A549 (cell line): ENCODE measurements at regions of chr17 and their contacts with region 1.

Region 1: GRCh38 chr17:79393358-79394202 is 217.3 kb downstream of the RBFOX3 start:
- DNase-seq: peak; percentile 69 to 89
- ATAC-seq: peak; percentile 63 to 87
- H3K4me3 ChIP-seq: no peak overlapping the region
- H3K27ac ChIP-seq: no peak overlapping the region
- H3K4me1 ChIP-seq: no peaks in the 10 kb centered on the region
- CTCF ChIP-seq: peak; percentile 83
- EP300 ChIP-seq: no peak
- POLR2A ChIP-seq: no peak
- RAD21 ChIP-seq: peak; percentile 84 to 95

Region 2: GRCh38 chr17:79019632-79020584 is 373.7 kb before region 1 on chr17:
- CTCF ChIA-PET with region 1: interaction called, 44 read pairs
- POLR2A ChIA-PET with region 1: no interaction called
- DNase-seq: peak; percentile 71 to 82
- ATAC-seq: peak; percentile 48 to 62; a peak in 3 of 6 replicates
- H3K4me3 ChIP-seq: no peak overlapping the region
- H3K27ac ChIP-seq: peak overlapping the region; percentile 32 to 43; a peak in 4 of 6 replicates
- H3K4me1 ChIP-seq: peaks cover 15% of the 10 kb centered on the region
- CTCF ChIP-seq: peak; percentile 98
- EP300 ChIP-seq: no peak; a peak in 1 of 5 replicates
- POLR2A ChIP-seq: no peak
- RAD21 ChIP-seq: peak; percentile 91 to 96

Region 3: GRCh38 chr17:79087428-79088143 is 306.0 kb before region 1 on chr17:
- CTCF ChIA-PET with region 1: interaction called, 555 read pairs
- POLR2A ChIA-PET with region 1: interaction called, 3 read pairs
- DNase-seq: peak; percentile 68 to 96
- ATAC-seq: peak; percentile 70 to 90
- H3K4me3 ChIP-seq: no peak overlapping the region
- H3K27ac ChIP-seq: no peak overlapping the region
- H3K4me1 ChIP-seq: no peaks in the 10 kb centered on the region
- CTCF ChIP-seq: peak; percentile 95
- EP300 ChIP-seq: no peak
- POLR2A ChIP-seq: no peak
- RAD21 ChIP-seq: peak; percentile 88 to 89

Region 4: DNA sequence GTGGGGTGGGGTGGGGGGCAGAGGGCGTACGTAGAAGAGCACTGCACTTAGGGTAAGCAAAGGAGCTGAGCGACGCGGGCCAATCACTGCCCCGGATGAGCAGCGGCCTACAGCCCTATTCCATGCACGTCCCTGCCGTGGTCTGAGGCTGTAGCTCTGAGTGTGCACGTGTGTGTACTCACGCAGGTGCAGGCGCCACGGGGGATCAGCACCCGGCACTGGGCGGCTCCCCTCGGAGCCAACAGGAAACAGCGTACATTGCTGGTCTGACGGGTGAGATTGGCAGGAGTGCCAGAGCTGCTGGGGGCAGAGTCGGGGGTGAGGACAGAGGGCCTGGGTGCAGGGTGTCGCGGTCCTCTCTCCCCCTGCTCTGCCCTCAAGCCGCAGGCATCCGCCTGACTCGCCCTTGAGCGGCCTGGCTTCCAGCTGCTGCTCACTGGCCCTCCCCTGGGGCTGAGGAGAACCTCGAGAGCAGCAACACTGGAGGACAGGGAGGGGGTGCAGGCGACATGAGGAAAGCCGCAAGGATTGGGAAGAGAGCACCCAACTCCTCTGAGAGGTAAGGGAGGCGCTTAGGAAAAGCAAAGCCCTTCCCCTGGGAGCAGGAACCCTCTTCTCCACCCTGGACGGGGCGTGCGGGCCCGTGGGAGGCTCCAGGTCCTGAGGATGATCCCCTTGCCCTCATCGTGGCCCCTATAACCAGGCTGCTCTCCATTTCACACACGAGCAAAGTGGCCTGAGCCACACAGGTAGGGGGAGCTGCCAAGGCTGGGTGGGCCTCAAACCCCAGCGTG is 261.1 kb before region 1 on chr17:
- CTCF ChIA-PET with region 1: interaction called, 12 read pairs
- POLR2A ChIA-PET with region 1: no interaction called
- DNase-seq: no peak
- ATAC-seq: no peak
- H3K4me3 ChIP-seq: no peak overlapping the region
- H3K27ac ChIP-seq: no peak overlapping the region
- H3K4me1 ChIP-seq: no peaks in the 10 kb centered on the region
- CTCF ChIP-seq: no peak
- EP300 ChIP-seq: no peak
- POLR2A ChIP-seq: no peak
- RAD21 ChIP-seq: no peak

Region 5: DNA sequence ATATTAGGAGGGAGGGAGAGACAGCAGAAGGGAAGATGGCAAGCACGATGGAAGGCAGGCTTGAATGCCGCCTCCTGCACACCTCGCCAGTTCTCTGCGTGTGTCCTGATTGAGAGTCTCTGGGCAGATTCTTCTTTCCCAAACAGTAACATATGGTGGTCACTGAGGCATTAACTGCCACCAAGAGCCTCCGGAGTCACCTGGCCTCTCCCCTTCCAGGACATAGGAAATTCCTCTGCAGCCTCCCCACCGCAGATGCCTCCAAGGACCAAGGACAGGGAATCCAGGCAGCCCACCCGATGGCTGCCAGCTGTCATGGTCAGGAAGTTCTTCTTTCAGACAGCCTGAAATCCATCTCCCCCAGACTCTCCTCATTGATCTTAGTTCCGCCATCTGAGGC is 169.6 kb before region 1 on chr17:
- CTCF ChIA-PET with region 1: interaction called, 10 read pairs
- POLR2A ChIA-PET with region 1: no interaction called
- DNase-seq: no peak
- ATAC-seq: no peak
- H3K4me3 ChIP-seq: no peak overlapping the region
- H3K27ac ChIP-seq: 0 out of 6 replicates have a peak overlapping the region, but pooled peaks of 1 of the 2 experiments have one; percentile 2
- H3K4me1 ChIP-seq: peaks cover 22% of the 10 kb centered on the region
- CTCF ChIP-seq: no peak
- EP300 ChIP-seq: no peak
- POLR2A ChIP-seq: no peak
- RAD21 ChIP-seq: no peak

Region 6: DNA sequence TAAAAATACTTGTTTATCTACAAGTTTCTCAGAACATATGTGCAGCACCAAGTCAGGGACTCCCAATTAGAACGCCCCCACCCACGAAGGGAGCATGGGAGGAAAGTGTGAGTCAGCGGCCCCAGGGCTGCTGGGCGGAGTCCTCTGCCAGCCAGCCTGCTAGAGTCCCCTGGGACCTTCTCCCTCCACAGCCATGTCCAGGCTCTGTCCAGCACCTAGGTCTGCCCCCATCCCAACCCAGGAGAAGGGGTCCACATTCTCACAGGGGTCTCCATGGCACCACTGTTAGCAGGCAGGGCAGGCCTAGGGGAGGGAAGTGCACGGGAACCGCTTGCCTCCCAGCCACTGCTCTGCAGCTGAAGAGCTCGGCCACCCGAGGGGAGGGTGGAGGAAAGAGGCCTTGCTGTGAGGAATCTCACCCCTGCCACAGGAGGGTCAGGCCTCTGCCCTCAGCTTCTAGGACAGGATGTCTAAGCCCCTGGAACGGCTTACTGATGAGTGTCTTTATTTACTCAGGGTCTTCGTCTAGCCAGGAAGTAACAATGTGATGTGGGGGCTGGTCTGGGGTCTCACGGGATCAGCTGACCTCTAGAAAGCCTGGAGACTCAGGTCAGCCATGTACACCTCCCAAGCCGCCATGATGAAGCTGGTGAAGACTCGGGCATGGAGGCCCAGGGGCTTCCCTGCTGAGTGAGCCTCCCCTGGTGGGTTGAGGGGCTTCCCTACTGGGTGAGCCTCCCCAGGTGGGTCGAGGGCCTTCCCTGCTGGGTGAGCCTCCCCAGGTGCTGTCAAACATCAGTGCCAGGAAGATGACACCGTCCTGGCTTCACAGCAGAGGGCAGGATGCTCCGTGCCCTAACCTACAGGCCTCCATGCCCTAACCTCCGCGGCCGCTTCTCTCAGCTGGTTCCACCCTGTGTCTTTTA is 27.0 kb after region 1 on chr17:
- CTCF ChIA-PET with region 1: interaction called, 11 read pairs
- POLR2A ChIA-PET with region 1: no interaction called
- DNase-seq: peak; percentile 51 to 66
- ATAC-seq: peak; percentile 62 to 73
- H3K4me3 ChIP-seq: no peak overlapping the region
- H3K27ac ChIP-seq: peak overlapping the region; percentile 64 to 82
- H3K4me1 ChIP-seq: peaks cover 55% of the 10 kb centered on the region
- CTCF ChIP-seq: no peak
- EP300 ChIP-seq: no peak
- POLR2A ChIP-seq: no peak
- RAD21 ChIP-seq: no peak

Region 7: DNA sequence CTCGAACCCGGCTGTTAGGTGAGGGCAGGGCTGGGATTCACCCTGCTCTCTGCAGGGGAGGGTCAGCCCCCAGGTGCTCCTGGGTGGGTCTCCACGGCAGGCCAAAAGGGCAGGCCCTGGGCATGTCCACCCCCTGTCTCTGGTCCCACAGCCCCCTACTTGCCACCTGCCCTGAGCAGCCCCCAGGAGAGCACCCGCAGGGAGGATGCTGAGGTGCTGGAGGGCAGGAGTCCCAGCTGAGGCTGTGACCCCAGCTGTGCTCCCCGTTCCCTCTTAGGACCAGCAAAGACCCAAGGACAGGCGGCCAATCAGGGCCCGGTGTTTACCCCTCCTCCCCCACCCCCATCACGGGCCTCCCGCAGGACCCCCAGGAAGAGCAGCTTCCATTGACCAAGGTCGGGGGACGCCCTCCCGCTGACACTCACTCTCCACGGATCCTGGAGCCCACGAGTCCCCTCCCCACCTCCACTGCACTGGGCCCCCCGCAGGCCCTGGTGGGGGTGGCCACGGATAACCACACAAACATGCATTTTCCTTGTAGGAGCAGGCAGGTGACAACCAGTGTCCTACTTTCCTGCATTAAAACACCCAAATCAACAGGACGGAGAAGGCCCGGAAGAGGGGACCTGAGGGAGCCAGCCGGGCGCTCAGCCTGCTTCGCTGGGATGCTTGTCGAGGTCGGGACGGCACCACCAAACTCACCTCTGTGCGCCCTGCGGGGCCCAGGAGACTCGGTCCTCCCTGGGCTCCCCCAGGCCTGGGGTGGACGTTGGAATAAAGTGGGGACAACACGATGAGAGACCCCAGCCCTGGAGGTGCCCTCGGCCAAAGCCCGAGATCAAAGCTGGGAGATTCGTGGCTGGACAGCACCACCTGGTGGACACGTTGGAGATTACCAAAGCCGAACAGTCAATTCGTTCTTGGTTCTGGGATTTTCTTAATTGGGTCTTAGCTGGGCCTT is 314.6 kb after region 1 on chr17:
- CTCF ChIA-PET with region 1: interaction called, 49 read pairs
- POLR2A ChIA-PET with region 1: no interaction called
- DNase-seq: peak; percentile 66 to 71
- ATAC-seq: peak; percentile 58 to 80
- H3K4me3 ChIP-seq: no peak overlapping the region
- H3K27ac ChIP-seq: peak overlapping the region; percentile 63 to 77; a peak in 5 of 6 replicates
- H3K4me1 ChIP-seq: peaks cover 17% of the 10 kb centered on the region
- CTCF ChIP-seq: peak; percentile 96
- EP300 ChIP-seq: no peak
- POLR2A ChIP-seq: no peak
- RAD21 ChIP-seq: peak; percentile 96 to 97

Region 8: GRCh38 chr17:80008383-80008840 is 614.8 kb after region 1 on chr17:
- CTCF ChIA-PET with region 1: no interaction called
- POLR2A ChIA-PET with region 1: no interaction called
- DNase-seq: peak; percentile 77 to 91
- ATAC-seq: peak; percentile 78 to 91
- H3K4me3 ChIP-seq: no peak overlapping the region
- H3K27ac ChIP-seq: peak overlapping the region; percentile 7 to 16; a peak in 3 of 6 replicates
- H3K4me1 ChIP-seq: peaks cover 15% of the 10 kb centered on the region
- CTCF ChIP-seq: peak; percentile 89
- EP300 ChIP-seq: no peak
- POLR2A ChIP-seq: no peak
- RAD21 ChIP-seq: peak; percentile 64 to 65